ENCODE measurements at regions of chr12 and their contacts with region 1.

Region 1: DNA sequence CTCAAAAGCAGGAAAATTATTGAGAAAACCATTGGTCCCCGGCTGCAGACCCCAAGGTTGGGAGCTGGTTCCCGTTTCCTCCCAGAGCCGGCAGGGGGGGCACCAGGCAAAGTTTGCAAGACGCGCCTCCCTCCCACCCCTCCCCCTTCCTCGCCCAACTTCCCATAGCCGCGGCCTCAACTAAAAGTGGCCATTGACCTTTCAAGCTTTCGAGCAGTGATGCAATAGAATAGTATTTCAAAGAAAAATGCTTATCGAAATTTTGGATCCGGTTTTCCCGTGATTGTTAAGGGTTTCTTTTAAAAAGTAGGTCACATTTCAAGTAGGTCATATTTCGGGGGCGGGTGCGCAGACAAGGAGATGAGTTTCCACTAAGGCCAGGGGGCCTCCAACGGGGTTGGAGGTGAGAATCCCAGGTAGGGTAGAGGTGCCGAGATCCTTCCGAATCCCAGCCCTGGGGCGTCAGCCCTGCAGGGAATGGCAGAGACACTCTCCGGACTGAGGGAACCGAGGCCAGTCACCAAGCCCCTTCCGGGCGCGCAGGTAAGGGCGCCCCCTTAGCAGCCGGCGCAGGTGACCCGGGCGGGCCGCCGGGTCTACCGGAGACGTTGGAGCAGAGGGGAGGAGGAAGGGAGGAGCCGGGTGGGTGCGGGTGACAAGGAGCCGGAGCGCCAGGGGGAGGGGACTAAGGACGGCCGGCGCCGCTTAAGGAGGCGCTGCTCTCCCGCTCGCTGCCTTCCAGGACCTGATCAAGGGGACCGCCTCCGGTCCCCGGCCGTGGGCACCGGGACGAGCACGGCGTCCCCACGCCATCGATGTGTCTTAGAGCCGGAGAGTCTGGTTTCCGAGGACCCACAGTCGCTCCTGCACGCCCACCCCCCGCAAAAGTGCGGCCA is 2.6 kb upstream of the SOCS2 start:
- DNase-seq: peak; percentile 91
- H3K4me3 Mint-ChIP-seq: peak overlapping the region; percentile 84
- H3K27ac Mint-ChIP-seq: peak overlapping the region; percentile 42
- H3K4me1 Mint-ChIP-seq: peaks cover 15% of the 10 kb centered on the region
- H3K27me3 Mint-ChIP-seq: no peaks in the 10 kb centered on the region
- CTCF ChIP-seq: peak; percentile 94

Region 2: DNA sequence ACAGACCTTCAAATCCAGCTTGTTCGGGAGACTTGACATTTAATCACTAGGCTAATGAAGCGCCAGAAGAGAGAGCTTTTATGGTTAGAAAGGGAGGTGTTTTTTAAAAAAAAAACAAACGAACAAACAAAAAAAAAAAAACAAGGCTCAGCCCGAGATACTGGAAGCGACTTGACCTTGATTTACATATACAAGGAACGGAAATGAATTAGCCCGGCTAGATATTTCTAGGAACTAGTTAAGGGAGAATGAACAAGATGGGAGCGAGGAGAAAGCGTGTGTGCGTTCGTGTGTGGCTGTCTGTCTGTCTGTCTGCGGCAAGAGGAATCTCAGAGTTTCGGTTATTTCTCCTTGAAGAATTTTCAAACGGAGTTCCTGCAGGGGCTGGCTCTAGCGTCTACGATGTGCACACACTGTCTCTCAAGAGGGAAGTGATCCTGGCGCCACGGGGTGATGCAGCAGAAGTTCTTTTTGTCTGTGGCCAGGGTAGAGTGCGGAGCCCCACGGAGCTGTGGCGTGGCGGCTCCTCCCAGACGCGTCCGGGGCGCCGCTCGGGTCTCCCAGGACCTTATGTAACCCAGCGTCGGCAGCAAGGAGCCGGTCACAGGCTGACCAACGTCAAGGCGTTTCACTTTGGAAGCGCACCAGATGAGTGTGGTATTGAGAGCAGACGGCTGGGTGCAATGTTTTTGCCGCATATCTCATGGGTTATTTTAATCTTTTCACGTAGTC is 21.4 kb after region 1 on chr12:
- CTCF ChIA-PET with region 1: interaction called, 3 read pairs
- POLR2A ChIA-PET with region 1: interaction called, 33 read pairs
- intact Hi-C with region 1: no loop called
- DNase-seq: peak; percentile 78
- H3K4me3 Mint-ChIP-seq: peak overlapping the region; percentile 95
- H3K27ac Mint-ChIP-seq: peak overlapping the region; percentile 93
- H3K4me1 Mint-ChIP-seq: peaks cover 4% of the 10 kb centered on the region
- H3K27me3 Mint-ChIP-seq: no peaks in the 10 kb centered on the region
- CTCF ChIP-seq: no peak

Region 3: GRCh38 chr12:93677195-93678064 is 107.5 kb after region 1 on chr12 and contains the start of gene CRADD:
- CTCF ChIA-PET with region 1: interaction called, 3 read pairs
- POLR2A ChIA-PET with region 1: interaction called, 8 read pairs
- intact Hi-C with region 1: loop called (anchors 1 kb)
- DNase-seq: peak; percentile 97
- H3K4me3 Mint-ChIP-seq: peak within 1 kb of the TSS; percentile 98
- H3K27ac Mint-ChIP-seq: peak within 1 kb of the TSS; percentile 100
- H3K4me1 Mint-ChIP-seq: peaks cover 21% of the 10 kb centered on the region
- H3K27me3 Mint-ChIP-seq: no peaks in the 10 kb centered on the region
- CTCF ChIP-seq: no peak
- total RNA-seq, gene CRADD: 15.4 and 17.1 TPM in 2 replicates

Region 4: DNA sequence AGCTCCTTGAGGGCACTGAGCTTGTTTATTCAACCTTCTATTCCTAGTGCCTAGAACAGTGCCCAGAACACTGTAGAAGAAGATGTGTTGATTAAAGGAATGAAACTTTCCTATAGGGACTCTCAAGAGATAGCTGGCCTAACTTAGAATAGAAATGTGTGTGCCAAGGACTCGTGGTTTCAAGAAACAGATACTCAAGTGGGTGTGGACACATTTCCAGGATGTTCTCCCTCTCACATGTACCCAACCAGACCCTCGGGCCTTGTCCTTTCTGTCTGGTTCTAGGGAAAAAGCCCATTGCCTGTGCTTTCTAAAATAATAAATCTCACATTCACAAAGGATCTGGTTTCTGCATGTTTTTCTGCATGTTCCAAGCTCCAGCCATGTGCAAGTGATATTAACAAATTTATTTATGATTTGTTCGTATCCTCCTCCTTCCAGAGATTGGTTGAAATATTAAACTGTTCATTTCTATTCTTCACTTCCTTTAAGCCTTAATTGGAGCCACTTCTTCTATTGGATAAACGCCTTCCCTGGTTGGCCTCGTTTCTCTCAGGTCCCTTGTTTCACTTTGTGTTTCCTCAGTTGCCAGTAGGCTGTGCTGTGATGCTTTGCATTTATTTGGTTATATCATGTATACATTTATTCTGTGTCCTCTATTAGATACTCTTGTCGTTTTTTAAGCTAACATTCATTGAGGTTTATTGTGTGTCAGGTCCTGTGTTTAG is 197.1 kb after region 1 on chr12:
- CTCF ChIA-PET with region 1: interaction called, 24 read pairs
- POLR2A ChIA-PET with region 1: interaction called, 11 read pairs
- intact Hi-C with region 1: loop called (anchors 1 kb)
- DNase-seq: peak; percentile 77
- H3K4me3 Mint-ChIP-seq: no peak overlapping the region
- H3K27ac Mint-ChIP-seq: no peak overlapping the region
- H3K4me1 Mint-ChIP-seq: peaks cover 26% of the 10 kb centered on the region
- H3K27me3 Mint-ChIP-seq: no peaks in the 10 kb centered on the region
- CTCF ChIP-seq: peak; percentile 57

Region 5: DNA sequence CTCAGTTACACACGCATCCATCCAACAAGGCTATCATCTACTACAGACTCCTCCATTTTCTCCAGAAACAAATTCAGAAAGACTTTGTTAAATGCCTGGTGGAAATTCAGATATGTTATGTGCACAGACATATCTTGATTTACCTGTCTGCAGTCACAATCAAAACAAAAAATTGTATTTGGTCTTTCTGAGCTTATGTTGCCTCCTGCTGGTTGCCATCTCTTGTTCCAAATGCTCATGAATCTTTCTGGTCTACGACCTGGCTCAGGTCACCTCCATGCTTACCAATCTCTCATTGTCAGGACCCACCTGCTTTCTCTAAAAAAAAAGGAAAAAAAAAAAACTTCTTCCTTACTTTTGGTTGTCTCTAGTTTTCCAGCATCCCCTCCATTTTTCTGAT is 409.3 kb after region 1 on chr12:
- CTCF ChIA-PET with region 1: interaction called, 3 read pairs
- POLR2A ChIA-PET with region 1: interaction called, 4 read pairs
- intact Hi-C with region 1: loop called (anchors 1 kb)
- DNase-seq: peak; percentile 56
- H3K4me3 Mint-ChIP-seq: no peak overlapping the region
- H3K27ac Mint-ChIP-seq: peak overlapping the region; percentile 75
- H3K4me1 Mint-ChIP-seq: peaks cover 39% of the 10 kb centered on the region
- H3K27me3 Mint-ChIP-seq: no peaks in the 10 kb centered on the region
- CTCF ChIP-seq: peak; percentile 36

Measured in MCF 10A (cell line).